ENCODE measurements at regions of chr1 and their contacts with region 1.

Region 1: DNA sequence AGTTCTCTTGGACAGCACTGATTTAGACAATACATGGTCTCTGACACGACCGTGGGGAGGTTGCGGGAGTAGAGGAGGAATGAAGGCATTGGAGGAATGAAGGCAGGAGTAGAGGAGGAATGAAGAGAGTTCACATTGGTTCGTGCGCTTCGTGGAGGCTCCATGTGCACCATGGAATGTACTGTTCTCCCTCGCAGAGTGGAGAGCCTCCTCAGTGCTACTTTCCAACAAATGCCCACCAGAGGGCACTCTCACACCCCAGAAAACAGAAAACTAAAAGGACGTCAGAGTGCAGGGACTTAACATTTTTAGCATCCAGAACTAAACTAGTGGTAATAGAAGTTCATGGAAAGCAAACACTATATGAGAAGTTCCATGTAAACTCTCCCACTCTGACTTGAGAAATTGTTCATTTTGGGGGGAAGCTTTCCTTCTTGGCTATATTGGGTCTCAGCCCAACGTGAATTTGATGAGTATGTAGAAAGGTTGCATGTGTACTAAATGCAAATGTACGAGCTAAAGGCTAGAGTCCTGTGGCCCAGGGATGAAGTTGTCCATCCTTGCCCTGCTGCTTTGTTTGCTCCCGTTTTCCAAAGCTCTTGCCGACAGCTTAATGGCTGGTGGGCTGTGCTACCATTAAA is 211.6 kb downstream of the LMX1A start:
- DNase-seq: peak; percentile 51
- ATAC-seq: peak; percentile 39
- H3K4me3 Mint-ChIP-seq: no peak overlapping the region
- H3K27ac Mint-ChIP-seq: no peak overlapping the region
- H3K4me1 Mint-ChIP-seq: no peaks in the 10 kb centered on the region
- H3K27me3 Mint-ChIP-seq: peaks cover 2% of the 10 kb centered on the region

Region 2: GRCh38 chr1:165129568-165130164 is 15.2 kb before region 1 on chr1:
- CTCF ChIA-PET with region 1: interaction called, 14 read pairs
- POLR2A ChIA-PET with region 1: no interaction called
- DNase-seq: peak; percentile 64
- ATAC-seq: peak; percentile 69
- H3K4me3 Mint-ChIP-seq: no peak overlapping the region
- H3K27ac Mint-ChIP-seq: no peak overlapping the region
- H3K4me1 Mint-ChIP-seq: peaks cover 4% of the 10 kb centered on the region
- H3K27me3 Mint-ChIP-seq: peaks cover 5% of the 10 kb centered on the region